ENCODE measurements at regions of chr4 and their contacts with region 1.

Region 1: DNA sequence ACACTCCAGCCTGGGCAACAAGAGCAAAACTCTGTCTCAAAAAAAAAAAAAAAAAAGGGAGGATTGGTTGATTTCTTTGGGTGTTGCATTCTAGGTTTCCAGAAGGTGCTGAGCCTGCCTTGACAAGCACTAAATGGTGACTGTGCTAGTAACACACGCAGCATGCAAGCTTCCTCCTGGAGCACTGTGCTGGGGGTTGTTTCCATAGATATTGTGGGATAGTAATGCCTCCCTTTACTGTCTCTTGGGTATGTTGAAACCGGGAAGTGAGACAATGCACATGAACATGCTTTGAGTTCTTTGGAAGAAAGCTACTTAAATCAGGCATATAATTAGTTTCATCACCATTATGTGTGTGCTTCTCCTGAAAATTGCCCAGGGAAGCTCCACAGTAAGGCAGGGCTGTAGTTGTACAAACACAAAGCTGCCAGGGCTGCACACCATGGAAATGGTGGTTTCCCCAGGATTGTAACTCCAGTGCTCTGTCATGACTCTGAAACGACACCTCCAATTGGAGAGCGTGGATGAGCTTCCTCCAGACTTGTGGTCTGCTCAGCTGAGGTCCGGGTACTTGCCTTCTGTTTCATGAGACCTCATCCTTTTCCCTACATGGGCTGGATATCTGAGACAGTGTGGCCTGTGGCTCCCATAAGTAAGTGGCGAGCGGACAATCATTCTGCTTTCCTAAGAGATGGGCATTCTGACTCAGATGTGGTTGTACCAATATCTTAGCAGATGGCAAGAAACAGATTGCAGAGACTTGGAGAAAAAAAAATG is 31.5 kb upstream of the STOX2 start:
- DNase-seq: no peak
- ATAC-seq: no peak
- H3K4me3 ChIP-seq: no peak overlapping the region
- H3K27ac ChIP-seq: no peak overlapping the region
- H3K4me1 ChIP-seq: no peaks in the 10 kb centered on the region
- H3K27me3 ChIP-seq: no peaks in the 10 kb centered on the region
- CTCF ChIP-seq: no peak

Region 2: DNA sequence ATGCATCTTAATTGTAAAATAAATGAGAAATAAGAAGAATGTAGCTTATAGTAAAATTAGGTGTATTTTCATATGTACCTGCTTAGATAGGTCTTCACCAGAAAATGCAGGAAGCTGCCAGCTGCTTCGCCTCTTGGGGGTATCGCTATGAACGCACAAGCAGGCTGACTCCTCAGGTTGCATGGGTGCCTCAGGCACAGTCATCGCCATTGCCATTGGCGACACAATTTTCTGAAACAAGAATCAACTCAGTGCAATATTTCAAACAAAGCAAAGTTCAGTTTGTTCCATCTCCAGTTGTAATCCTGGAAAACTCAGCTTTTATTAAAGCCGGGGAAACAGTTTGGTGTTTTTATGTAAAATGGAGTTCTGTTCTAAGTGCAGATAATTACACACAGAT is 61.2 kb after region 1 on chr4:
- CTCF ChIA-PET with region 1: interaction called, 11 read pairs
- POLR2A ChIA-PET with region 1: no interaction called
- in situ Hi-C with region 1: no loop called
- intact Hi-C with region 1: no loop called
- DNase-seq: no peak
- ATAC-seq: no peak
- H3K4me3 ChIP-seq: no peak overlapping the region
- H3K27ac ChIP-seq: no peak overlapping the region
- H3K4me1 ChIP-seq: no peaks in the 10 kb centered on the region
- H3K27me3 ChIP-seq: no peaks in the 10 kb centered on the region
- CTCF ChIP-seq: no peak

Region 3: GRCh38 chr4:184016759-184017668 is 143.4 kb after region 1 on chr4:
- CTCF ChIA-PET with region 1: no interaction called
- POLR2A ChIA-PET with region 1: no interaction called
- in situ Hi-C with region 1: no loop called
- intact Hi-C with region 1: no loop called
- DNase-seq: no peak
- ATAC-seq: no peak
- H3K4me3 ChIP-seq: no peak overlapping the region
- H3K27ac ChIP-seq: no peak overlapping the region
- H3K4me1 ChIP-seq: no peaks in the 10 kb centered on the region
- H3K27me3 ChIP-seq: no peaks in the 10 kb centered on the region
- CTCF ChIP-seq: no peak